ENCODE measurements at regions of chr16 and their contacts with region 1.

Region 1: GRCh38 chr16:27179500-27180072 is 23.7 kb upstream of the KDM8 start:
- DNase-seq: peak; percentile 89 to 96 (median 94)
- ATAC-seq: peak; percentile 95 to 97
- H3K4me3 ChIP-seq: no peak overlapping the region
- H3K27ac ChIP-seq: no peak overlapping the region
- H3K4me1 ChIP-seq: peaks cover 2% of the 10 kb centered on the region
- H3K27me3 ChIP-seq: no peaks in the 10 kb centered on the region

Region 2: GRCh38 chr16:27367461-27368357 is 188.1 kb after region 1 on chr16:
- intact Hi-C with region 1: loop called (anchors 2 to 10 kb)
- DNase-seq: peak; percentile 89 to 94 (median 92)
- ATAC-seq: peak; percentile 83 to 84
- H3K4me3 ChIP-seq: no peak overlapping the region
- H3K27ac ChIP-seq: peak overlapping the region; percentile 19
- H3K4me1 ChIP-seq: peaks cover 4% of the 10 kb centered on the region
- H3K27me3 ChIP-seq: no peaks in the 10 kb centered on the region

Region 3: DNA sequence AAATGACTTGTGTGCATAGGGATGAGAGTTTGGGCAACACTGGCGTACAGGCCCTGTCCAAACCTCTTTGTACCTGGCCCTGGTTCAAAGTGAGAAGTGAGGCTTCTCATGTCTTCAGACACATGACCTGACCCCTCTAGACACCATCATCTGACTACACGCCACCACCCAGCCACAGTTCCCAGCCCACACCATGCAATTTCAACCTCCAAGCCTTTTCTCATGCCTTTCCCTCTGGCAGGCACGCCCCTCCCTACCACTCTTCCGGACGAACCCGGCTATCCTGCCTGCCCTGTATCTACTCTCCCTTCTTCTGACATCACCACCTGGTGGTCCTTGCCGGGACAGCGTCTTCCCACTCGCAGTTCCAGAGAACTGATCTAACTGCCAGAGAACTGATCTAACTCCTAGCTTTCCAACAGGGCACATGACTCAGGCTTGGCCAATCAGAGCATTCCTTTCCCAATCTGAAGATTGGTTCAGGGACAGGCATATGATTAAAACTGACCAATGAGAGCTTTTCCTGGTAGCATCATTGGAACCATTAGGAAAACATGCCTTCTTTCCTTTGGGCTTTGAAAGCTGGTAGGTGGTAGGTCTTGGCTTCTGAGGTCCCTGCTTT is 195.3 kb after region 1 on chr16:
- intact Hi-C with region 1: loop called in 2 of 4 experiments (anchors 2 to 5 kb)
- DNase-seq: peak; percentile 81 to 88 (median 86)
- ATAC-seq: peak; percentile 86 to 93
- H3K4me3 ChIP-seq: no peak overlapping the region
- H3K27ac ChIP-seq: no peak overlapping the region
- H3K4me1 ChIP-seq: no peaks in the 10 kb centered on the region
- H3K27me3 ChIP-seq: no peaks in the 10 kb centered on the region

Region 4: DNA sequence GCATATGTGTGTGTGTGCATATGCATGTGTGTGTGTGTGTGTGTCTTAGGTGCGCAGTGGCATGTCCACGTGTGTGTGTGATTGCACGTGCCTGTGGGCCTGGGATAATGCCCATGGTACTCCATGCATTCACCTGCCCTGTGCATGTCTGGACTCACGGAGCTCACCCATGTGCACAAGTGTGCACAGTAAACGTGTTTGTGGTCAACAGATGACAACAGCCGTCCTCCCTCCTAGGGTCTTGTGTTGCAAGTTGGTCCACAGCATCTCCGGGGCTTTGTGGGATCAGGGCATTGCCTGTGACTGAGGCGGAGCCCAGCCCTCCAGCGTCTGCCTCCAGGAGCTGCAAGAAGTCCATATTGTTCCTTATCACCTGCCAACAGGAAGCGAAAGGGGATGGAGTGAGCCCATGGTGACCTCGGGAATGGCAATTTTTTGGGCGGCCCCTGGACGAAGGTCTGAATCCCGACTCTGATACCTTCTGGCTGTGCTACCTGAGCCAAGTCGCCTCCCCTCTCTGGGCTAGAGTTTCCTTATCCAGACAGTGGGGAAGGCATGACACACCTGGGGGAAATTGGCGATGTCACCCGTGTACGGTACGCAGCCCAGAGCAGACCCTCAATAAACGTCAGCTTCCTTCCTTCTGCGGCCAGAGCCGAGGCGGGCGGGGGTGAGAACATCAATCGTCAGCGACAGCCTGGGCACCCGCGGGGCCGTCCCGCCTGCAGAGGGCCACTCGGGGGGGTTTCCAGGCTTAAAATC is 270.0 kb after region 1 on chr16:
- intact Hi-C with region 1: loop called in 1 of 4 experiments (anchors 10 kb)
- DNase-seq: peak in 1 of 3 donors; percentile 39
- ATAC-seq: peak in 1 of 2 donors; percentile 28
- H3K4me3 ChIP-seq: no peak overlapping the region
- H3K27ac ChIP-seq: no peak overlapping the region
- H3K4me1 ChIP-seq: no peaks in the 10 kb centered on the region
- H3K27me3 ChIP-seq: no peaks in the 10 kb centered on the region

Region 5: GRCh38 chr16:27455700-27456099 is 276.1 kb after region 1 on chr16:
- intact Hi-C with region 1: loop called in 2 of 4 experiments (anchors 5 to 10 kb)
- DNase-seq: no peak
- ATAC-seq: peak; percentile 9 to 61
- H3K4me3 ChIP-seq: no peak overlapping the region
- H3K27ac ChIP-seq: no peak overlapping the region
- H3K4me1 ChIP-seq: peaks cover 2% of the 10 kb centered on the region
- H3K27me3 ChIP-seq: no peaks in the 10 kb centered on the region

Measured in right cardiac atrium (tissue), 5 donors.